HepG2 (cell line): ENCODE measurements at regions of chr19 and their contacts with region 1.

Region 1: DNA sequence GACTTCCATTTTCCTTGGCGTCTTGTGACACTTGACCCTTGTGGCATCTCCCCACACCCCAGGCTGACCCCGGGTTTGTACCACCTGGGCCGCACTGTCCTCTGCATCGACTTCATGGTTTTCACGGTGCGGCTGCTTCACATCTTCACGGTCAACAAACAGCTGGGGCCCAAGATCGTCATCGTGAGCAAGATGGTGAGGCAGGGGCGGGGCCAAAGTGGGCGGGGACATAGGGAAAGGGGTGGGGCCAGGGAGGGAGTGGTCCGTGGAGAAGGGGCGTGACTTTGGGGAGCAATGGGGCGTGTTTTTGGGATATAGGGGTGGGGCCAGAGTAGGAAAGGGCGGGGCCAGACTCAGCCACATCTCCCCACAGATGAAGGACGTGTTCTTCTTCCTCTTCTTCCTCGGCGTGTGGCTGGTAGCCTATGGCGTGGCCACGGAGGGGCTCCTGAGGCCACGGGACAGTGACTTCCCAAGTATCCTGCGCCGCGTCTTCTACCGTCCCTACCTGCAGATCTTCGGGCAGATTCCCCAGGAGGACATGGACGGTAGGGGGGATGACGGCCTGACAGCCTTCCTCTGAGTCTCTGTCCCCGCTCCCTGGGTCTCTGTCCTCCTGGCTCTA is 42.8 kb downstream of the TRPM4 start:
- DNase-seq: no peak
- ATAC-seq: no peak
- H3K4me3 ChIP-seq: no peak overlapping the region
- H3K27ac ChIP-seq: no peak overlapping the region
- H3K4me1 ChIP-seq: peaks cover 13% of the 10 kb centered on the region
- H3K27me3 ChIP-seq: no peaks in the 10 kb centered on the region; a peak in 1 of 5 replicates
- CTCF ChIP-seq: no peak
- EP300 ChIP-seq: no peak
- POLR2A ChIP-seq: no peak
- RAD21 ChIP-seq: no peak

Region 2: GRCh38 chr19:49097455-49098288 is 102.7 kb before region 1 on chr19:
- CTCF ChIA-PET with region 1: interaction called, 12 read pairs
- POLR2A ChIA-PET with region 1: interaction called, 4 read pairs
- in situ Hi-C with region 1: loop called (anchors 10 kb)
- intact Hi-C with region 1: no loop called
- DNase-seq: peak; percentile 55
- ATAC-seq: peak; percentile 73
- H3K4me3 ChIP-seq: no peak overlapping the region
- H3K27ac ChIP-seq: no peak overlapping the region
- H3K4me1 ChIP-seq: no peaks in the 10 kb centered on the region
- H3K27me3 ChIP-seq: no peaks in the 10 kb centered on the region
- CTCF ChIP-seq: peak; percentile 97
- EP300 ChIP-seq: no peak
- POLR2A ChIP-seq: no peak; a peak in 1 of 4 replicates
- RAD21 ChIP-seq: peak; percentile 74

Region 3: DNA sequence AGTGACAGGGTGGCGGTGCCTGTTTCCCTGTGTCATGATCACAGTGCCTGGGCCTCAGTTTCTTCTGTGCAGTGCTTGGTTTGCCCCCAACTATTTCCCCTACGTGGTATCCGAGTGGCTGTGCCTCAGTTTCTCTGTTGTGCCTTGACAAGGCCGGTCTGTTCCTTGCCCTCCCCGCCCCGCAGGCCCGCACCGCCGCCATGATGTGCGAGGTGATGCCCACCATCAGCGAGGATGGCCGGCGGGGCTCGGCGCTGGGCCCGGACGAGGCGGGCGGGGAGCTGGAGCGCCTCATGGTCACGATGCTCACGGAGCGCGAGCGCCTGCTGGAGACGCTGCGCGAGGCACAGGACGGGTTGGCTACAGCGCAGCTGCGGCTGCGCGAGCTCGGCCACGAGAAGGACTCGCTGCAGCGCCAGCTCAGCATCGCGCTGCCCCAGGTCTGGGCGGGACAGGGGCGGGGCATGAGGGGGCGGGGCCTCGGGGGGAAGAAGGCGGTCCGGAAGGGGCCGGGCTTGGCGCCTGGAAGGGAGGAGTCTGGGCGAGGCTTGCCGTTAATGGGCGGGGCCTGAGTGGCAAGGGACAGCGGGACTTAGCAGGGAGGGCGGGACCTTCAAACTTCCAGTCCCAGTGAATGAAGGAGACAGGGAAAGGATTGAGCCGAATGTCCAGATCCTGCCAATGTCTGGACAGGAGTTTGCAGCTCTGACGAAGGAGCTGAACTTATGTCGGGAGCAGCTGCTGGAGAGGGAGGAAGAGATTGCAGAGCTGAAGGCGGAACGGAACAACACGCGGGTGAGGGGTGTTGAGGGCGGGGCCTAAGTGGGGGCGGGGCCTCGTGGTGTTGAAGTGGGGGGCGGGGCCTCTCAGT is 72.4 kb before region 1 on chr19:
- CTCF ChIA-PET with region 1: no interaction called
- POLR2A ChIA-PET with region 1: interaction called, 4 read pairs
- in situ Hi-C with region 1: no loop called
- intact Hi-C with region 1: loop called (anchors 5 kb)
- DNase-seq: peak; percentile 93
- ATAC-seq: peak; percentile 92
- H3K4me3 ChIP-seq: peak overlapping the region; percentile 49 to 75 (median 58)
- H3K27ac ChIP-seq: peak overlapping the region; percentile 72
- H3K4me1 ChIP-seq: peaks cover 49% of the 10 kb centered on the region
- H3K27me3 ChIP-seq: no peaks in the 10 kb centered on the region
- CTCF ChIP-seq: peak; percentile 65
- EP300 ChIP-seq: 0 out of 4 replicates have a peak, but pooled peaks of 1 of the 2 experiments have one; percentile 4
- POLR2A ChIP-seq: peak; percentile 17 to 80; a peak in 3 of 4 replicates
- RAD21 ChIP-seq: peak; percentile 68

Region 4: DNA sequence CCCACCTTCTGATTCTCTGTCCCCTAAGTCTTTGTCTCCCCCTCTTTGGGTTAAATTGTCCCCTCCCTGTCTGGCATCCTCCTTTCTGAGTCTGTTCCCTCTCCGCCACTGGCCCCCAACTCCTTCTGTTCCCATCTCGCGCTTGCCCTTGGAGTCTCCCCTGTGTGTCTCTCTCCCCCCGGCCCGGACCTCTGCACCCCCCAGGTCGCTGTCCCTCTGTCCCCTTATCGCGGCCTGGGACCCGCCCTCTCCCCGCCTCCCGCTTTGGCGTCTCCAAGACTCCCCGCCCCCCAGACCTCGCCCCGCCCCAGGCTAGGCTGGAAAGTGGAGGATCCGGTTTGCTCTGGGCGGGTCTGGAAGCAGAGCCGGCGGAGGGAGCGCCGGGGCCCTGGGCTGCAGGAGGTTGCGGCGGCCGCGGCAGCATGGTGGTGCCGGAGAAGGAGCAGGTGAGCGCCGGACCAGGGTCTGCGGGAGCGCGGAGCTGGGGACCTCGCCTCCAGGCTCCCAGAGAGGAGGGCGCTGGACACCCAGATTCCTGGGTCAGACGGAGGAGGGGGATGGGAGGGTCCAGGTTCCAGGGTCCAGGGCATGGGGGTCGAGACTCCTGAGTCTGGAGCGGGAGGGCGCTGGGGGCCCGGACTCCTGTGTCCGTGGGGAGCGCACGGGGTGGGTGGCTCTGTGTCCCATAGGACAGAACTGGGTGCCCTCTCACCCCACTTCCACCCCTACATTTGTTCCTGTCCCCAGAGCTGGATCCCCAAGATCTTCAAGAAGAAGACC is 42.7 kb before region 1 on chr19 and contains the start of gene TRPM4:
- CTCF ChIA-PET with region 1: no interaction called
- POLR2A ChIA-PET with region 1: interaction called, 9 read pairs
- in situ Hi-C with region 1: loop called (anchors 5 kb)
- intact Hi-C with region 1: loop called (anchors 10 kb)
- DNase-seq: peak; percentile 61
- ATAC-seq: peak; percentile 83
- H3K4me3 ChIP-seq: peak within 1 kb of the TSS; percentile 72 to 81 (median 73)
- H3K27ac ChIP-seq: peak within 1 kb of the TSS; percentile 48
- H3K4me1 ChIP-seq: peaks cover 56% of the 10 kb centered on the region
- H3K27me3 ChIP-seq: no peaks in the 10 kb centered on the region; a peak in 2 of 5 replicates
- CTCF ChIP-seq: no peak
- EP300 ChIP-seq: no peak
- POLR2A ChIP-seq: peak in 1 of 2 experiments; percentile 87; a peak in 2 of 4 replicates
- RAD21 ChIP-seq: no peak
- total RNA-seq, gene TRPM4: 1.7 and 1.9 TPM in 2 replicates